Activated CD4-positive, alpha-beta T cell treated with anti-CD3 and anti-CD28 coated beads for 36 hours (primary cell): ENCODE measurements at regions of chr5 and their contacts with region 1.

Region 1: GRCh38 chr5:149526845-149527580 is 24.2 kb downstream of the CSNK1A1 start:
- DNase-seq: no peak
- ATAC-seq: no peak
- H3K4me3 Mint-ChIP-seq: no peak overlapping the region
- H3K27ac Mint-ChIP-seq: no peak overlapping the region
- H3K4me1 Mint-ChIP-seq: peaks cover 83% of the 10 kb centered on the region
- H3K27me3 Mint-ChIP-seq: no peaks in the 10 kb centered on the region

Region 2: DNA sequence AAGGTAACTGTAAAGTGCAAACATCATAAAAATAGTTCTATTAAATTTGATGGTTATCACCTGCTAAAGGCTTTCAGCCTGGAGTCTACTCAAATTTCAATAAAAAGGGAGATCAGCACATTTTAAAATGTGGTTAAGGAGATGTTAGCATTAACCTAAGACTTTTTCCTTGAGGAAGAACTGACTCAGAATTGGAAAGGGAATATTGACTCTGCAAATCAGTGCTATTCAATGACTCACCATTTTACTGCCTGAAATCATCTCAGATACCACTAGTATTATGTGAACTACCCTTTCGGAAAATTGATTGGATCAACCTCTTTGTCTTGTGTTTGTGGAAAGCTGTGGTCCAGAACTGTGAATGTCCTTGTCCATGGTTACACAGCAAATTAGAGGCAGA is 587.3 kb before region 1 on chr5:
- CTCF ChIA-PET with region 1: no interaction called
- POLR2A ChIA-PET with region 1: no interaction called
- intact Hi-C with region 1: no loop called
- DNase-seq: no peak
- ATAC-seq: no peak
- H3K4me3 Mint-ChIP-seq: no peak overlapping the region
- H3K27ac Mint-ChIP-seq: no peak overlapping the region
- H3K4me1 Mint-ChIP-seq: no peaks in the 10 kb centered on the region
- H3K27me3 Mint-ChIP-seq: peaks cover 7% of the 10 kb centered on the region

Region 3: DNA sequence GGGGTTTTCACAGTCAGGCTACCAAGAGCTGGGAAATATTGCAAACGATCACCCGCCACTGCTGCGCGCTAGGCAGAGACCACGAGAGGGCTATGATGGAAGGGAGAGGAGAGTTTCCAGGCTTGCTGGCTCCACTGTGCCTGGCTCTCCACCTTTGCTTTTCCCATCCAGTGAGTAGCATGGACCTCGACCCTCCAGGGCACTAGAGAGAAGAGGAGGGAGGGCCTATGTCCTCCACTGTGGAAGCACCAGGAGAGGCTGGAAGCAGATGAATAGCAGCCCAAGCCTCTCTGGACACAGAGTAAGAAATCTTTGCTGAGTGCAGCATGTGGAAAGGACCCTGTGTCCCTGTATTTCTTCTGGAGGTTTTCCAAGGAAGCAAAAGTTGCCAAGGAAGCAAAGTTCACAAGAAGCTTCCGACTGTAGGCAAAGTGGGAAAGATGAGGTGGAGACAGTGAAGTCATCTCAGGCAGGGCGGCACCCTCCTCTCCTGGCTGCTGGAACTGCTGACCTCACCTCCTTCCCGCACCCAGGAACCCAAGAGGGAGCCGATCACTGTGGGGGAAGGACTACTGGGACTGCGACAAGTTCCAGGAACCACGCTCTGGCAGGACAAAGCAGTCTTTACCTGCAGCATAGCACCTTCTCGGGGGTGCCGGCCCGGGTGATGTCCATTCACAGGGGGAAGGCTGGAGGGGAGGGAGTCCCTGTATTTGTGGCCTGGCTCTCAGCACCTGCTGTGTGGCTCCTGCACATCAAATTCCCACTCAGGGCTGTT is 55.4 kb before region 1 on chr5:
- CTCF ChIA-PET with region 1: no interaction called
- POLR2A ChIA-PET with region 1: interaction called, 14 read pairs
- intact Hi-C with region 1: no loop called
- DNase-seq: no peak
- ATAC-seq: no peak
- H3K4me3 Mint-ChIP-seq: no peak overlapping the region
- H3K27ac Mint-ChIP-seq: no peak overlapping the region
- H3K4me1 Mint-ChIP-seq: no peaks in the 10 kb centered on the region
- H3K27me3 Mint-ChIP-seq: peaks cover 2% of the 10 kb centered on the region